ENCODE measurements at regions of chr16 and their contacts with region 1.

Region 1: GRCh38 chr16:31094424-31095120 is at the start of gene VKORC1:
- DNase-seq: peak; percentile 92 to 94 (median 93)
- H3K4me3 ChIP-seq: peak within 1 kb of the TSS; percentile 49 to 92 (median 92)
- H3K4me3 Mint-ChIP-seq: peak within 1 kb of the TSS; percentile 89 to 98
- H3K27ac ChIP-seq: peak within 1 kb of the TSS; percentile 52 to 74
- H3K27ac Mint-ChIP-seq: peak within 1 kb of the TSS; percentile 66 to 92 (median 86)
- H3K4me1 ChIP-seq: peaks cover 25 to 29% of the 10 kb centered on the region in 2 donors
- H3K4me1 Mint-ChIP-seq: peaks cover 21% of the 10 kb centered on the region
- H3K27me3 ChIP-seq: no peaks in the 10 kb centered on the region
- H3K27me3 Mint-ChIP-seq: peaks cover 0 to 4% (median 1%) of the 10 kb centered on the region in 3 donors
- CTCF ChIP-seq: no peak
- polyA plus RNA-seq, gene VKORC1: 59.2 to 113 (median 91.2) TPM

Region 2: DNA sequence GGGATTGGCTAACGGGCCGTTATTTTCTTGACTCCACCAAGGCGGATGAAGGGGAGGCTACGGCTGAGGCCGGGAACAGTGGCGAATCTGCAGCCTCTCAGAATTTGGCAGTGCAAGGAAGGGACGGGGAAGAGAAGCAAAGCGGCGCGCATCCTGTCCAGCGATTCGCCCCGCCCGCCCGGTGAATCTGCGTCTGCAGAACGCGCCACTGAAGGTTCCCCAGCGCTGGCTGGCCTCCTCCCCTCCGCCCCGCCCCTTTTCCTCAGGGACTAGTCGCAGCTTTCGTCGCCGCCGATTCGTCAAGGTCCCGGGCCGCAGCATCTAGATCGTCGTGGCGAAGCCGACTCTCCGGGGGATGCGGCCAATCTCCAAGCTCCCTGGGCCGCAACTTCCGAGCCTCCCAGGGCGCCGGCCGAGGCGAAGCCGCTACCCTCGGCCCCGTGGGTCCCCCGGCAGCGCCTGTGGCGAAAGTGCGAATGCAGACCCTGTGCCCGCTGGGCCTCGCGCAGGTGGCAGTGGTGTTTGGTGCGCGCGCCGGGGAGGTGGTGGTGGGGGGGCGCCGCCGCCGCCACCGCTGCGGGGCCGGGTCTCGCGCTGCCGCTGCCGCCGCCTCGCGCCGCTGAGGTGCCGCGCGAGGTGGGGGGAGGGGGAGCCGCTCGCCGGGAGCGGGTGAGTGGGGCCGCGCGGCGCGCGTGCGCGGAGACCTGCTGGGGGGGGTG is 137.0 kb before region 1 on chr16 and contains the start of gene SETD1A:
- intact Hi-C with region 1: loop called in 1 of 2 experiments (anchors 10 kb)
- DNase-seq: peak; percentile 93 to 97 (median 96)
- H3K4me3 ChIP-seq: peak within 1 kb of the TSS; percentile 66 to 95 (median 71)
- H3K4me3 Mint-ChIP-seq: peak within 1 kb of the TSS; percentile 90 to 95
- H3K27ac ChIP-seq: peak within 1 kb of the TSS; percentile 88 to 97
- H3K27ac Mint-ChIP-seq: peak within 1 kb of the TSS; percentile 96 to 99 (median 99)
- H3K4me1 ChIP-seq: peaks cover 13 to 21% of the 10 kb centered on the region in 2 donors
- H3K4me1 Mint-ChIP-seq: peaks cover 17% of the 10 kb centered on the region
- H3K27me3 ChIP-seq: no peaks in the 10 kb centered on the region
- H3K27me3 Mint-ChIP-seq: peaks cover 0 to 1% (median 0%) of the 10 kb centered on the region in 3 donors
- CTCF ChIP-seq: no peak
- polyA plus RNA-seq, gene SETD1A: 0.16 to 6.6 (median 1.3) TPM

Region 3: DNA sequence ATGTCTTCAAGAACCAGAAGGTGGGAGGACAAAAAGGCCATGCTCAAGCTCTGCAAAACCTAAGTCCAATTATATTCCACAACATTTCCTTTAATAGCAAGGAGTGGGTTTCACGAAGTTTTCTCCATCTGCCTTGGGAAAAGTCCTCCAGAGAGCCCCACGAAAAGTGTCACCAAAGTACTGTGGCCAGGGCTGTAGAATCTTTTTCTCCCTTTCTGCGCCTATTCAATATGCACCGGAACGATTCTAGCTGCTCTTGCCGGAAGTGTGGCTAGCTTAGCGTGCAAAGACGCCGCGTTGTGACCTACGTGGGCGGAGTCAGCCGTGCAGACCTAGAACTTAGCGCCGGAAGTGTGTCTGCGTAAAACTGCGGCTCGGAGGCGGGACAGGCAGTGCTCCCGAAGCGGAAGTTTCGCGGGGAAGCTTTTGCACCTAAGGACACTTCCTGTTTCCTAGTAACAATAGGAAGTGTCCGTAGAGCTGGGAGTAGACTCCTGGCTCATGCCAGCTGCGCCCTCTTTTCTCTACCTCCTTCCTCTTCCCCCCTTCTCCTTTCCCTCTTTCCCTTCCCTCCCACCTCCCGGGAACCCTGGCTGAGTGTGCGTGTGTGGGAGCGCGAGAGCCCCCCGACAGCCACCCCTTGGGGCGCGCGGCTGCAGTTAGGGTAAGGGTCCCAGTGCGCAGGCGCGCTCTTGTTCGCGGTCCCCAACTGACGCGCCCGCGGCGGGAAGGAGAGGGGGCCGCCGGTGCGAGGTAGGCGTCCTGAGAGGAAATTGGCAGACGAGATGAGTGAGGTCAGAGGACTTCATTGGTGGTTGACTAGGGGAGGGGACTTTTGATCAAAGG is 20.4 kb before region 1 on chr16 and contains the starts of genes ZNF646 and ZNF668:
- intact Hi-C with region 1: loop called (anchors 1 to 2 kb)
- DNase-seq: peak; percentile 99 to 100 (median 100)
- H3K4me3 ChIP-seq: peak within 1 kb of the TSS; percentile 92 to 98 (median 97)
- H3K4me3 Mint-ChIP-seq: peak within 1 kb of the TSS; percentile 90 to 97
- H3K27ac ChIP-seq: peak within 1 kb of the TSS; percentile 97 to 100
- H3K27ac Mint-ChIP-seq: peak within 1 kb of the TSS; percentile 97 to 99 (median 98)
- H3K4me1 ChIP-seq: peaks cover 33 to 38% of the 10 kb centered on the region in 2 donors
- H3K4me1 Mint-ChIP-seq: peaks cover 38% of the 10 kb centered on the region
- H3K27me3 ChIP-seq: no peaks in the 10 kb centered on the region
- H3K27me3 Mint-ChIP-seq: peaks cover 0 to 2% (median 1%) of the 10 kb centered on the region in 3 donors
- CTCF ChIP-seq: no peak
- polyA plus RNA-seq, gene ZNF646: 0.46 to 6.5 (median 3.0) TPM
- polyA plus RNA-seq, gene ZNF668: 3.8 to 4.8 (median 4.5) TPM

Measured in CD14-positive monocyte (primary cell).